OCI-LY7 (cell line): ENCODE measurements at regions of chr19 and their contacts with region 1.

Region 1: DNA sequence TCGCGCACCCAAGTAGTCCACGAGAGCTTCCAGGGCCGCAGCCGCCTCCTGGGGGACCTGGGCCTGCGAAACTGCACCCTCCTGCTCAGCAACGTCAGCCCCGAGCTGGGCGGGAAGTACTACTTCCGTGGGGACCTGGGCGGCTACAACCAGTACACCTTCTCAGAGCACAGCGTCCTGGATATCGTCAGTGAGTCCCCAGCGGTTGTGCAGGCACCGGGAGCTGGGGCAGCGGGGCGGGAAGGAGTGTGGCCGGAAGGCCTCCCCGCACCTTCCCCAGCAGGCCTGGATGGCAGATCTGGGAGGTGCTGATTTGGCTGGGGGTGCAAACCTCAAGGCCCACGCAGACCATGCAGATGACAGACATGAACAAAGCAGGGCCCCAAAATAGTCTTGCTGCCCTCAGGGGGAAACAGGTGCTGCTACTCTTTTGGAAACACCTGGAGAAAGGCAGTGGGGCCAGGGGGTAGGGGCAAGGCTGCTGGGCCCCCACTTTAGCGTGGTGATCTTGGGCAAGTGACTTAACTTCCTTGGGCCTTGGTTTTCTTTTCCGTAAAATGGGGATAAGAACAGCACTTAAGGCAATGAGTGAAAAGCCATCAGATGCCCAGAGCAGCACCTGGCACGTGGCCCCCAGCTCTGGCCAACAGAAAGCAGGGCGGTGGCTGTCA is 4.0 kb downstream of the MAG start:
- DNase-seq: peak; percentile 92
- H3K4me3 ChIP-seq: peak overlapping the region; percentile 63
- H3K27ac ChIP-seq: peak overlapping the region; percentile 88
- H3K4me1 ChIP-seq: peaks cover 87% of the 10 kb centered on the region
- CTCF ChIP-seq: no peak

Region 2: DNA sequence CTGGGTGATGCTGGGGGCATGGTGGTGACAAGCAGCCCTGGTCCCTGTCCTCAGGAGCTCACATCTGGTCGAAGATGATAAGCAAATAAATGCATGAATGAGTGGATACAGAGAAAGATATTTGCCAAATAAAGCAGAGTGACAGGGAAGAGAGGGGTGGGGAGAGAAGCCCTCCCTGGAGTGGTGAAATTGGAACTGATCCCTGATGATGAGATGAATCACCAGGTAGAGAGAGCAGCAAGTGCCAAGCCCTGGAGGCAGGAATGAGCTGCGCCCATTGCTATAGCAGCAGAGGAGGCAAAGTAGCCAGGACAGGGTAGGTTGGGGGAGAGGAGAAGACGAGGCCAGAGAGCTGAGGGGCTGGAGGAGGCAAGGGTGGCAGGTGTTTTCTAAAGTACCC is 127.7 kb before region 1 on chr19:
- CTCF ChIA-PET with region 1: no interaction called
- POLR2A ChIA-PET with region 1: no interaction called
- intact Hi-C with region 1: no loop called
- DNase-seq: no peak
- H3K4me3 ChIP-seq: no peak overlapping the region
- H3K27ac ChIP-seq: no peak overlapping the region
- H3K4me1 ChIP-seq: no peaks in the 10 kb centered on the region
- CTCF ChIP-seq: no peak

Region 3: DNA sequence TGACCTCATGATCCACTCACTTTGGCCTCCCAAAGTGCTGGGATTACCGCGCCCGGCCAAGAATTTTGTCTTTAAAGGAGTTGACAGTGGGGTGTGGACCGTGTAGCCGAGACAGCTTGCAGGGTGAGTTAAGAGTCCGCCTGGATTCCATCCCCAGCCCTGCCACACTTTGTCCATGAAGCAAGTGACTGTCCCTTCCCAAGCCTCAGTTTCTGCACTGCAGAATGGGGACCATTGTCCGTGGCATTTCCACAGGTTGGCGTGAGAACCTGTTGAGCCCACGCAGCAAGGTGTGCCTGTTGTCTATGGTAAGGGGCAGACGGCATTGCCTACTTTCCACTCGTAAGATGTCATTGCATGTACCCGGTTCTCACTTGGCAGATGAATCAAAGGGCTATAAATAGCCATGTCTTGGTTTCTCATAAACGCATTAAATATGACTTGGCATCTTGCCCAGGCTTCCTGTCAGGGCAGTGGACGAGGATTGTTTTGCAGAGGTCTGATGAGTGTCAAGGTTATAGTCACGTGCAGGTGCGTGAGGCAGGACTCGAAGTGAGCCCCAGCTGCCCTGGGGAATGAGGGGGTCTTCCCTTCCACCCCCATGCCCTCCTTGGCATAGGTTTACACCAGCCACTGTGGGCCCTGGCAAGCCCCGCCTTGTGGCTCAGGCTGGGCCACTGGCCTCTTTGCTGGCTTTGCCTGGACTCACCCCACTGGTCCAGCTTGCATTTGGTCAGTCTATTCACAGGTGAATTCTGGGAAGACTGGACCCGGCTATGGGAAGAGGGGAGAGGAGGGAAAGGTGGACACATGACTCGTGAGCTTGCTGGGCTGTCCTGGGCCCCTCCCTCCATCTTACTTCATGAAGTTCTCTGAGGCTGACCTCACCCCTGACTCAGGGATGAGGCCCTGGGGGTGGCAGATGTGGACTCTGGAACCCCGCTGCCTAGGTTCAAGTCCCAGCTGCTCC is 82.0 kb before region 1 on chr19:
- CTCF ChIA-PET with region 1: no interaction called
- POLR2A ChIA-PET with region 1: no interaction called
- intact Hi-C with region 1: loop called (anchors 5 kb)
- DNase-seq: peak; percentile 93
- H3K4me3 ChIP-seq: peak overlapping the region; percentile 38
- H3K27ac ChIP-seq: peak overlapping the region; percentile 83
- H3K4me1 ChIP-seq: peaks cover 77% of the 10 kb centered on the region
- CTCF ChIP-seq: no peak

Region 4: GRCh38 chr19:35236638-35237400 is 59.1 kb before region 1 on chr19:
- CTCF ChIA-PET with region 1: no interaction called
- POLR2A ChIA-PET with region 1: no interaction called
- intact Hi-C with region 1: no loop called
- DNase-seq: peak; percentile 41
- H3K4me3 ChIP-seq: no peak overlapping the region
- H3K27ac ChIP-seq: no peak overlapping the region
- H3K4me1 ChIP-seq: peaks cover 9% of the 10 kb centered on the region
- CTCF ChIP-seq: peak; percentile 59

Region 5: DNA sequence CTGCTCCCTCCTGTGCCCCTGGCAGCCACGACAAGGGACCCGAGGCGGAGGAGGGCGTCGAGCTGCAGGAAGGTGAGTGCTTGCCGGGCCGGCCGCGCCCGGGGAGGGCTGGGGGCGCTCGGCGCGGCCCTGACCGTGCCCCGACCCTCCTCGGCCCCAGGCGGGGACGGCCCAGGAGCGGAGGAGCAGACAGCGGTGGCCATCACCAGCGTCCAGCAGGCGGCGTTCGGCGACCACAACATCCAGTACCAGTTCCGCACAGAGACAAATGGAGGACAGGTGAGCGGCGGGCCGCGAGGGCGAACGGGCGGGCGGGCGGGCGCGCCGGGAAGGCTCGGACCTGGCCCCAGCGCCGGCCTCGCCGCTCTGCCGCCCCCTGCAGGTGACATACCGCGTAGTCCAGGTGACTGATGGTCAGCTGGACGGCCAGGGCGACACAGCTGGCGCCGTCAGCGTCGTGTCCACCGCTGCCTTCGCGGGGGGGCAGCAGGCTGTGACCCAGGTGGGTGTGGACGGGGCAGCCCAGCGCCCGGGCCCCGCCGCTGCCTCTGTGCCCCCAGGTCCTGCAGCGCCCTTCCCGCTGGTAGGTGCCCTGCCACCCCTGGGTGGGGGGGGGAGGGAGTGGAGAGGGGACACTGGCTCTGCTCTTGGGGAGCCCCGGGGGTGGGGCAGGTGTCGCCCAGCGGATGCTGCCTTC is 26.4 kb before region 1 on chr19:
- CTCF ChIA-PET with region 1: no interaction called
- POLR2A ChIA-PET with region 1: no interaction called
- intact Hi-C with region 1: loop called (anchors 1 kb)
- DNase-seq: peak; percentile 90
- H3K4me3 ChIP-seq: peak overlapping the region; percentile 75
- H3K27ac ChIP-seq: peak overlapping the region; percentile 61
- H3K4me1 ChIP-seq: peaks cover 43% of the 10 kb centered on the region
- CTCF ChIP-seq: peak; percentile 73

Region 6: GRCh38 chr19:35279985-35280821 is 15.7 kb before region 1 on chr19:
- CTCF ChIA-PET with region 1: no interaction called
- POLR2A ChIA-PET with region 1: no interaction called
- intact Hi-C with region 1: no loop called
- DNase-seq: peak; percentile 39
- H3K4me3 ChIP-seq: no peak overlapping the region
- H3K27ac ChIP-seq: peak overlapping the region; percentile 17
- H3K4me1 ChIP-seq: peaks cover 18% of the 10 kb centered on the region
- CTCF ChIP-seq: no peak

Region 7: DNA sequence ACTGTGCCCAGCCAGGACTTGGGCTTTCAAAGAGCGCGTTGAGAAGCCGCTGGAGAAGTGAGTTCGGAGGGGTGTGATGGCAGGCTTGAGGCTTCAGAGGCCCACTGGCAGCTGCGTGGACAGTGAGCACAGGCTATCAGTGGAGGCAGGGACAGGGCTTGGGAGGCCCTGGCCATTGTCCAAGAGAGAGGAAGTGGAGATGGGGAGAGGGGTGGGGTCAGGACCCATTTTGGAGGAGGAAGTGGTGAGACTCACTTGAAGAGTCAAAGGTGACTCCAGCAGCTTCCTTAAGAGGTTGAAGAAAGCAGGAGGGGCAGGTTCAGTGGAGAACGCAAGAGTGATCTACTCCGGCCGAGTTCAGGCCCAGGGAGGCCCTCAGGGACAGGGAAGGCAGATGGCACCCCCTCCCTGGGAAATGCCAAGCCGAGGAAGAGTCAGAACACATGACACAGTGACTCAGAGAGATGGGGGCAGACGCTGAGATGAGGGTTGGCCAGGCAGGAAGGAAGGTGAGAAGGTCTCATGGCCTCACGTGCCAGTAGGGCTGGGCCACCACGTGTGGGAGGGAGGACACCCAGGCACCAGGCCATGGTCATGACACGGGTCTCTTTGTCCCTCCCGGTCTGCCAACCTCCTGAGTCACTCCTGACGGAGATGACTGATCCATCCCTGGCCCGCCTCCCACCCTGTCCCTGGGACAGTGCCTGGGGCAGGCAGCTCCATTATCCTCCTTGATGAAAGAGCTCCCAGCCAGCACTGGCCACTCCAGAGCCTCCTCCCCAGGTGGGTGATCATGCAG is 22.9 kb after region 1 on chr19:
- CTCF ChIA-PET with region 1: interaction called, 4 read pairs
- POLR2A ChIA-PET with region 1: interaction called, 9 read pairs
- intact Hi-C with region 1: loop called (anchors 2 kb)
- DNase-seq: no peak
- H3K4me3 ChIP-seq: peak overlapping the region; percentile 1
- H3K27ac ChIP-seq: peak overlapping the region; percentile 88
- H3K4me1 ChIP-seq: peaks cover 86% of the 10 kb centered on the region
- CTCF ChIP-seq: no peak

Region 8: GRCh38 chr19:35330475-35330874 is 34.5 kb after region 1 on chr19:
- CTCF ChIA-PET with region 1: interaction called, 3 read pairs
- POLR2A ChIA-PET with region 1: interaction called, 14 read pairs
- intact Hi-C with region 1: loop called (anchors 1 kb)
- DNase-seq: peak; percentile 97
- H3K4me3 ChIP-seq: peak overlapping the region; percentile 88
- H3K27ac ChIP-seq: peak overlapping the region; percentile 88
- H3K4me1 ChIP-seq: peaks cover 82% of the 10 kb centered on the region
- CTCF ChIP-seq: no peak

Region 9: GRCh38 chr19:35347171-35347929 is 51.4 kb after region 1 on chr19 and contains the start of gene FFAR1:
- CTCF ChIA-PET with region 1: interaction called, 4 read pairs
- POLR2A ChIA-PET with region 1: interaction called, 4 read pairs
- intact Hi-C with region 1: loop called (anchors 2 kb)
- DNase-seq: peak; percentile 89
- H3K4me3 ChIP-seq: peak within 1 kb of the TSS; percentile 32
- H3K27ac ChIP-seq: peak within 1 kb of the TSS; percentile 96
- H3K4me1 ChIP-seq: peaks cover 90% of the 10 kb centered on the region
- CTCF ChIP-seq: no peak
- total RNA-seq, gene FFAR1: 8.5 and 11.4 TPM in 2 replicates